Uterus (tissue), 4 donors: ENCODE measurements at regions of chr7 and their contacts with region 1.

Region 1: GRCh38 chr7:44408596-44408995 is 81.9 kb downstream of the NUDCD3 start:
- DNase-seq: no peak
- H3K4me3 ChIP-seq: no peak overlapping the region
- H3K27ac ChIP-seq: peak overlapping the region; percentile 29 to 58
- H3K4me1 ChIP-seq: no peaks in the 10 kb centered on the region
- H3K27me3 ChIP-seq: no peaks in the 10 kb centered on the region
- CTCF ChIP-seq: no peak
- POLR2A ChIP-seq: no peak

Region 2: DNA sequence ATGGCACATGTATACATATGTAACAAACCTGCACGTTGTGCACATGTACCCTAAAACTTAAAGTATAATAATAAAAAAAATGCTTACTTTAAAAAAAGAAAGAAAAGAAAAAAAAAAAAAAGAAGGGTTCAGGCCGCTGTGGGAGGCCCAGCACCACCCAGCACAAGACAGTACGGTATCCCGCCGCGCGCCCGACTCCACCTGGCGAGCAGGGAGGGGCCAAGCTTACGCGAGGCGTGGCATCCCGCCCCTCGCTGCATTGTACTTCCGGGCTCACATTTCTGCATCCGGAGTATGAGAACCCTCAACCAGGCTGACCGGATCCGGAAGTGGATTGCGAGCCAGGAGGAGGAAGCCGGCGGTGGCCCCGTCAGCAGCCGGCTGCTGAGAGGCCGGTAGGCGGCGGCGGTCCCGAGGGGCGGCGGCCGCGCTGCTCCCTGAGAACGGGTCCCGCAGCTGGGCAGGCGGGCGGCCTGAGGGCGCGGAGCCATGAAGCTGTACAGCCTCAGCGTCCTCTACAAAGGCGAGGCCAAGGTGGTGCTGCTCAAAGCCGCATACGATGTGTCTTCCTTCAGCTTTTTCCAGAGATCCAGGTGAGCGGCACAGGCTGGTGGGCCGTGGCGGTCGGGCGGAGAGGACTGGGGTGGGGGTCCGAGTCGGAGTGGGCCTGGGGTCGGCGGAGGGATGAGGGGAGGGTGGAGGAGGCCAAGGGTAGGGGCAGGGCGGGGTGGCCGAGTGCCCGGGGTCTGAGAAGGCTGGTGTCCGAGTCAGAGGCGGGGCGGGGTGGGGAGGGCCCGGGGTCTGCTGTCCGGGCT is 207.7 kb before region 1 on chr7 and contains the start of gene YKT6:
- intact Hi-C with region 1: no loop called
- DNase-seq: peak; percentile 90 to 91
- H3K4me3 ChIP-seq: peak within 1 kb of the TSS; percentile 81 to 84
- H3K27ac ChIP-seq: peak within 1 kb of the TSS; percentile 55 to 78
- H3K4me1 ChIP-seq: no peaks in the 10 kb centered on the region
- H3K27me3 ChIP-seq: no peaks in the 10 kb centered on the region
- CTCF ChIP-seq: peak; percentile 33 to 80 (median 69)
- POLR2A ChIP-seq: peak; percentile 47 to 69
- total RNA-seq, gene YKT6: 12.4 to 85.3 (median 49.4) TPM

Region 3: GRCh38 chr7:44448922-44449583 is 40.5 kb after region 1 on chr7:
- intact Hi-C with region 1: loop called (anchors 1 kb)
- DNase-seq: no peak
- H3K4me3 ChIP-seq: no peak overlapping the region
- H3K27ac ChIP-seq: no peak overlapping the region
- H3K4me1 ChIP-seq: no peaks in the 10 kb centered on the region
- H3K27me3 ChIP-seq: no peaks in the 10 kb centered on the region
- CTCF ChIP-seq: no peak
- POLR2A ChIP-seq: no peak

Region 4: GRCh38 chr7:44548893-44549292 is 140.3 kb after region 1 on chr7:
- intact Hi-C with region 1: no loop called
- DNase-seq: no peak
- H3K4me3 ChIP-seq: no peak overlapping the region
- H3K27ac ChIP-seq: no peak overlapping the region
- H3K4me1 ChIP-seq: no peaks in the 10 kb centered on the region
- H3K27me3 ChIP-seq: no peaks in the 10 kb centered on the region
- CTCF ChIP-seq: no peak
- POLR2A ChIP-seq: no peak